Left lung (tissue), 14 donors: ENCODE measurements at regions of chr14 and their contacts with region 1.

Region 1: DNA sequence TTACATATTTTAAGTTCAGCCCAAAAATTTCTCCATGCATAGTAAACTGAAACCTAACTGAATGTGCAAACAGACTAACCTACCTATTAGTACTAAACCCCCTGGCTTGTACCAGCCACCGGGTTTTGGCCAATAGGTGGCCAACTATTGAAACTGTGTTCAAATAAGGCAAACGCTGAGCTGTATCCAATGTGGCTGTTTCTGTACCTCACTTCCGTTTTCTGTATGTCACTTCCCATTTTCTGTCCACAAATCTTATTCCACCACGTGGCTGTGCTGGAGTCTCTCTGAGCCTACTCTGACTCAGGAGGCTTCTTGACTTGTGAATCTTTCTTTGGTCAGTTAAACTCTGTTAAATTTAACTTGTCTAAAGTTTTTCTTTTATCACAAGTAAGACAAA is 6.0 kb upstream of the FBXO34 start:
- DNase-seq: no peak
- ATAC-seq: no peak
- H3K4me3 ChIP-seq: no peak overlapping the region
- H3K27ac ChIP-seq: no peak overlapping the region
- H3K4me1 ChIP-seq: no peaks in the 10 kb centered on the region
- H3K27me3 ChIP-seq: no peaks in the 10 kb centered on the region
- CTCF ChIP-seq: no peak

Region 2: DNA sequence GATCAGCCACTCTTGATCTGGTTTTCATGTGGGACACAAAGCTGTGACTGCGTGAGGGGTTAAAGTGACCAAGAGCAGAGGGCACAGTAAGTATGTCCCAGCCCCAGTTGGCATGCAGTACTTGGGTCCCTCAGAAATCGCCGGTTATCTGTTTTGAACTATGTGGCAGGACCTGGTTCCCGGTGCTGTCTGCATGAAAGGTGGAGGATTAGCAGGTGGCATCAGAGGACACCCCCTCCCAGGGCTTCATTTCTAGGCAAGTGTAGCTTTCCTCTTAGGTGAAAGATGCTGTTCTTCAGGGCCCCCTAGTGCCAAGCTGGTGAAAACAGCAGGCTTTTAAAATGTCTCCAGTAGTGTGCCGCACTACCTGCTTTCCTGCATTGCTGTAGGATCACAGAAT is 89.3 kb after region 1 on chr14:
- intact Hi-C with region 1: loop called in 1 of 2 experiments (anchors 10 kb)
- DNase-seq: peak in 2 of 4 donors; percentile 30 to 51
- ATAC-seq: peak; percentile 84
- H3K4me3 ChIP-seq: no peak overlapping the region
- H3K27ac ChIP-seq: peak overlapping the region in 1 of 2 donors; percentile 13
- H3K4me1 ChIP-seq: peaks cover 0 to 8% of the 10 kb centered on the region in 2 donors
- H3K27me3 ChIP-seq: no peaks in the 10 kb centered on the region
- CTCF ChIP-seq: peak; percentile 37 to 45